Heart right ventricle (tissue), 16 donors: ENCODE measurements at regions of chr11 and their contacts with region 1.

Region 1: DNA sequence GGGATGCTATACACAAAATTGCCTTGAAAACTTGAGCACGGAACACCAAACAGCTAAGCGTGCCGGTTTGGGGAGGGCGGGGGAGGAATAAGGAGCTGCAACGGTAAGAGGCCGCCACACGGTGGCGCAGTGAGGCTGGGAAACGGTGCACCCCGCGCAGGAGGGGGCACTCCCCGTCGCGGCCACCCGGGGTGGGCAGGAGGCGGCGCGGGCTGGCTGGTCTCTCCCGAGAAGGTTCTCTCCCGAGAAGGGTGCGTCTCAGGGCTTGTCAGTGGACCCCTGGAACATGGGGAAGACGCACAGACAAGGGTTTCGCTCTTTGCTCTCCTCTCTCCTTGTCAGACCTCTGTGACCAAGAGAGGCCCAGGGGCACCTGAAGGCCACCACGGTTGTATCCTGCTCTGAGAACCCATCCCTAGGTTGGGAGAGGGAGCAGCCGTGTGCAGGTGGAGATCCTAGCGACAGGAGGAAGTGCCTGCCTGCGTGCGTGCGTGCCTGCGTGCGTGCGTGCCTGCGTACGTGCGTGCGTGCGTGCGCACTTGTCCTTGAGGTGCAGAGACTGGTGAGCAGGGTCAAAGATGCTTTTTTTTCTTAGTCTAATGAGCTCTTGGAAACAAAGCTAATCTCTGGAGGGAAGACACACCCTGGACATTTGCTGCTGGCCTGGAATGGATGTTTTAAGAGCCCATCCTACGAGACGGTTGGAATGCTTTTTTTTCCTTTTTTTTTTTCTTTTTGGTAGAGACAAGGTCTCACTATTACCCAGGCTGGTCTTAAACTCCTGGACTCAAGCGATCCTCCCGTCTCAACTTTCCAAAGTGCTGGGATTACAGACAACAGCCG is 18.1 kb upstream of the JAM3 start:
- DNase-seq: peak; percentile 66 to 81
- ATAC-seq: peak; percentile 70 to 85 (median 80)
- H3K4me3 ChIP-seq: peak overlapping the region in 7 of 10 donors; percentile 21 to 48 (median 37)
- H3K27ac ChIP-seq: peak overlapping the region in 2 of 10 donors; percentile 28 to 40
- H3K4me1 ChIP-seq: peaks cover 0 to 32% (median 14%) of the 10 kb centered on the region in 9 donors
- H3K27me3 ChIP-seq: peaks cover 0 to 12% (median 0%) of the 10 kb centered on the region in 7 donors
- CTCF ChIP-seq: peak; percentile 82 to 98 (median 95)

Region 2: GRCh38 chr11:133927690-133928627 is 122.8 kb before region 1 on chr11:
- intact Hi-C with region 1: loop called in 5 of 10 experiments (anchors 5 kb)
- DNase-seq: peak; percentile 57 to 67
- ATAC-seq: peak; percentile 74 to 88 (median 82)
- H3K4me3 ChIP-seq: peak overlapping the region in 5 of 10 donors; percentile 13 to 41 (median 17)
- H3K27ac ChIP-seq: peak overlapping the region in 1 of 10 donors; percentile 20
- H3K4me1 ChIP-seq: peaks cover 5 to 22% (median 14%) of the 10 kb centered on the region in 9 donors
- H3K27me3 ChIP-seq: no peaks in the 10 kb centered on the region
- CTCF ChIP-seq: peak; percentile 67 to 91 (median 86)

Region 3: GRCh38 chr11:133966921-133967598 is 83.7 kb before region 1 on chr11:
- intact Hi-C with region 1: loop called in 3 of 10 experiments (anchors 5 to 10 kb)
- DNase-seq: peak; percentile 56 to 77
- ATAC-seq: peak; percentile 49 to 84 (median 76)
- H3K4me3 ChIP-seq: peak overlapping the region in 7 of 10 donors; percentile 22 to 49 (median 40)
- H3K27ac ChIP-seq: no peak overlapping the region
- H3K4me1 ChIP-seq: peaks cover 0 to 11% (median 4%) of the 10 kb centered on the region in 9 donors
- H3K27me3 ChIP-seq: peaks cover 0 to 23% (median 3%) of the 10 kb centered on the region in 7 donors
- CTCF ChIP-seq: peak; percentile 29 to 81 (median 69)

Region 4: GRCh38 chr11:134124660-134125451 is 74.1 kb after region 1 on chr11:
- intact Hi-C with region 1: loop called in 1 of 10 experiments (anchors 5 kb)
- DNase-seq: peak; percentile 52 to 71
- ATAC-seq: peak; percentile 55 to 87 (median 67)
- H3K4me3 ChIP-seq: peak overlapping the region; percentile 19 to 62 (median 56)
- H3K27ac ChIP-seq: peak overlapping the region; percentile 24 to 95 (median 80)
- H3K4me1 ChIP-seq: peaks cover 8 to 71% (median 57%) of the 10 kb centered on the region in 9 donors
- H3K27me3 ChIP-seq: peaks cover 0 to 19% (median 0%) of the 10 kb centered on the region in 7 donors
- CTCF ChIP-seq: peak in 3 of 9 donors; percentile 31 to 41 (median 38)

Region 5: DNA sequence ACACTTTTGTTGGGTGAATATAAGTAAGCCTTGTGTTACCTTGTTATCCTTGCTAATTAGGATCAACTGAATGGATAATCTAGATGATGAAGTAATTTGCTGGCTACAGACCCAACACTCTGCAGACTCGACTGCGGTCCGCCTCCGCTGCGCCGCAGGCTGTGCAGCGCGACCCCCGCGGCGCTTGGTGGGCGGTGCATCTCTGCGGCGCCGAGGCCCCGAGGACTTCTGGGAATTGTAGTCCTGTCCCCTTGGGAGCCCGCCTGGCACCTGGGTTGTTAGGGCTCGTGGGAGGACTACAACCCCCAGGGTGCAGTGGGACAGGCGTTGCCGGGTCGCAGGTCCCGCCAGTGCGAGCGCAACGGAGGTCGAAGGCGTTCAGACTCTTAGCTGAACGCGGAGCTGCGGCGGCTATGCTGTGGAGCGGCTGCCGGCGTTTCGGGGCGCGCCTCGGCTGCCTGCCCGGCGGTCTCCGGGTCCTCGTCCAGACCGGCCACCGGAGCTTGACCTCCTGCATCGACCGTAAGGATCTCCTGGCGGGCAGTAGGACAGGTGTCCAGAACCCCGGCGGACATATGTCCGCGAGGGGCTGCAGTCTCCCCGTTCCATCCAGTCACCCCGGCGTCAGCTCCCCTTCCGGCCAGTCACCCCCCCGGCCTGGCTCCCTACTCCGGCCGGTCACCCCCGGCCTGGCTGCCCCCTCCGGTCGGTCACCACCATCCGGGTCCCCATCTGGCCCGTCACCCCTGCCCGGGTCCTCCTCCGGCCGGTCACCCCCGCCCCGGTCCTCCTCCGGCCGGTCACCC is 202.6 kb after region 1 on chr11 and contains the starts of genes ACAD8 and THYN1:
- intact Hi-C with region 1: loop called in 1 of 10 experiments (anchors 10 kb)
- DNase-seq: peak; percentile 96 to 98
- ATAC-seq: peak; percentile 100
- H3K4me3 ChIP-seq: peak within 1 kb of the TSS; percentile 82 to 97 (median 93)
- H3K27ac ChIP-seq: peak within 1 kb of the TSS; percentile 16 to 86 (median 80)
- H3K4me1 ChIP-seq: peaks cover 7 to 36% (median 25%) of the 10 kb centered on the region in 9 donors
- H3K27me3 ChIP-seq: no peaks in the 10 kb centered on the region
- CTCF ChIP-seq: peak in 8 of 9 donors; percentile 12 to 64 (median 48)
- total RNA-seq, gene ACAD8: 26.6 to 52.2 (median 42.5) TPM
- total RNA-seq, gene THYN1: 32.2 to 47.5 (median 41.5) TPM